ENCODE measurements at regions of chr16 and their contacts with region 1.

Region 1: DNA sequence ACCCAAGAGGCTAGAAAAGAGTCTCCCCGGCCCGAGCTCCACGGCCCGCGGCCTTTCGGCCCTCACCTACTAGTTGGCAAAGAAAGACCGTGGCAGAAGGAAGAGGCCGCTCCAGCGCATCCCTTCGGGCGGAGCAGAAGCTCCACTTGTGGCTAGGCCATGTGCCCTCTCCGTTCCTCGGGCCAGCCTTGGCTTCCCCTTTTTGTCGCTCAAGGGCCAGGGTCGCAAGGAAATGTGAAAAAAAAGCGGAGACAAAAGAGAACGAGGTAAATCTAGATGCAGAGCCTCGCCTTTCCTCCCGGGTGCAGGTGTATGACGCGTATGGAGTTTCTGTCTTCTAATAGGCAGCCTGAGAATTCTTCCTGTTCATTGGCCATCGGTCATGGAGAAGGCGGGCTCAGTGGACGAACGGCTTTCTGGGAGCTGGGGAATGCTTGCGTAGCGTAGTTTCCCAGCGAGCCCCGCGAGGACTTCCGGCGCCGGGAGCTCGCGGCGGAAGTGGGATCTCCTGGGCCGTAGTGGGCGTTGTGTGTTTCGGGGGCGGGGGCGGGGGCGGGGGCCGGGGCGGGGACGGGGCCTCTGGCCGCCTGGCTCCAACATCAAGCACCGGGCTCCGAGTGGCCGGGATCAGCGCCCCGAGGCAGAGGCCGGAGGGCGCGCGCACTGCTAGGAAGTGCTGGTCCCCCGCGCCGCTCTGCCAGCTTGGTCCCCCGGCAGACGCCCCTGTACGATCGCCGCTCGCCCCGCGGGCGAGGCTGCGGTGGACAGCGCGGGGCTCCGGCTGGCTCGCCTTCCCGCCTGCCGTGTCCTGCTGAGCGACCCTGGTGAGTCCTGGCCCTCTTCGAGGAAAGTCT is at the start of gene ZNF213:
- DNase-seq: peak; percentile 96
- H3K4me3 Mint-ChIP-seq: peak within 1 kb of the TSS; percentile 97
- H3K27ac Mint-ChIP-seq: peak within 1 kb of the TSS; percentile 88
- H3K4me1 Mint-ChIP-seq: peaks cover 38% of the 10 kb centered on the region
- H3K27me3 Mint-ChIP-seq: no peaks in the 10 kb centered on the region
- total RNA-seq, gene ZNF213: 10.5 to 11.6 TPM

Region 2: GRCh38 chr16:2656985-2657384 is 477.8 kb before region 1 on chr16:
- CTCF ChIA-PET with region 1: no interaction called
- POLR2A ChIA-PET with region 1: no interaction called
- DNase-seq: no peak
- H3K4me3 Mint-ChIP-seq: no peak overlapping the region
- H3K27ac Mint-ChIP-seq: no peak overlapping the region
- H3K4me1 Mint-ChIP-seq: peaks cover 18% of the 10 kb centered on the region
- H3K27me3 Mint-ChIP-seq: peaks cover 6% of the 10 kb centered on the region

Region 3: GRCh38 chr16:3045357-3045728 is 89.4 kb before region 1 on chr16:
- CTCF ChIA-PET with region 1: interaction called, 12 read pairs
- POLR2A ChIA-PET with region 1: interaction called, 15 read pairs
- DNase-seq: peak; percentile 61
- H3K4me3 Mint-ChIP-seq: peak overlapping the region; percentile 85
- H3K27ac Mint-ChIP-seq: peak overlapping the region; percentile 78
- H3K4me1 Mint-ChIP-seq: peaks cover 51% of the 10 kb centered on the region
- H3K27me3 Mint-ChIP-seq: peaks cover 24% of the 10 kb centered on the region

Region 4: DNA sequence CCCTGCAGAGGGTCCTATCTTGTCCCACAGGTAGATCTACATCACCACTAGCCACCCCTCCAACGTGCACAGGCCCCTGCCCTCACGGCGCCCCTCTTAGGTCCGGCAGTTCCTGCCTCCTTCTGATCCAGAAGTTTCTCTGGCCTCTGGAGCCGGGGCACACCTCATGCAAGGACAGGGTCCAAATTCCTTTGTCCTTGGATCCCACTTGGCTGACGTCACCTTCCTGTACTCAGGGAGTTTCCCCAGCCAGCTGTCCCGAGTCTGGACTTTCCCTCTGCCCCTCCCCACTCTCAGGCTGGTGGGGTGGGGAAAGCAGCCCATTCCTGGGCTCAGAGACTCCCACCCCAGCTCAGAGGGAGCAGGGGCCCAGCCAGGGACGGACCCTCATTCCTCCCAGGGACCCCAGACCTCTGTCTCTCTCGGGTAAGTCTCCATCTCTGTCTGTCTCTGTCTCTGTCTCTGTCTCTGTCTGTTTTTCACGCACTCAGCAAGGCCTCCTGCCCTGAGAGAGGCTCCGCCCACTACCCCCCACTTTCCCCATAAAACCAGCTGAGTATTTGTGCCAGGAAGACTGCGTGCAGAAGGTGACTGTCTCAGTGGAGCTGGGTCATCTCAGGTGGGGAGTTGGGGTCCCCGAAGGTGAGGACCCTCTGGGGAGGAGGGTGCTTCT is 69.6 kb before region 1 on chr16 and contains the start of gene IL32:
- CTCF ChIA-PET with region 1: interaction called, 177 read pairs
- POLR2A ChIA-PET with region 1: interaction called, 100 read pairs
- DNase-seq: peak; percentile 80
- H3K4me3 Mint-ChIP-seq: peak within 1 kb of the TSS; percentile 100
- H3K27ac Mint-ChIP-seq: peak within 1 kb of the TSS; percentile 99
- H3K4me1 Mint-ChIP-seq: peaks cover 68% of the 10 kb centered on the region
- H3K27me3 Mint-ChIP-seq: no peaks in the 10 kb centered on the region
- total RNA-seq, gene IL32: 4,131 to 4,213 TPM

Region 5: GRCh38 chr16:3099732-3100499 is 34.9 kb before region 1 on chr16:
- CTCF ChIA-PET with region 1: interaction called, 254 read pairs
- POLR2A ChIA-PET with region 1: interaction called, 14 read pairs
- DNase-seq: peak; percentile 96
- H3K4me3 Mint-ChIP-seq: peak overlapping the region; percentile 75
- H3K27ac Mint-ChIP-seq: peak overlapping the region; percentile 80
- H3K4me1 Mint-ChIP-seq: peaks cover 66% of the 10 kb centered on the region
- H3K27me3 Mint-ChIP-seq: no peaks in the 10 kb centered on the region

Region 6: DNA sequence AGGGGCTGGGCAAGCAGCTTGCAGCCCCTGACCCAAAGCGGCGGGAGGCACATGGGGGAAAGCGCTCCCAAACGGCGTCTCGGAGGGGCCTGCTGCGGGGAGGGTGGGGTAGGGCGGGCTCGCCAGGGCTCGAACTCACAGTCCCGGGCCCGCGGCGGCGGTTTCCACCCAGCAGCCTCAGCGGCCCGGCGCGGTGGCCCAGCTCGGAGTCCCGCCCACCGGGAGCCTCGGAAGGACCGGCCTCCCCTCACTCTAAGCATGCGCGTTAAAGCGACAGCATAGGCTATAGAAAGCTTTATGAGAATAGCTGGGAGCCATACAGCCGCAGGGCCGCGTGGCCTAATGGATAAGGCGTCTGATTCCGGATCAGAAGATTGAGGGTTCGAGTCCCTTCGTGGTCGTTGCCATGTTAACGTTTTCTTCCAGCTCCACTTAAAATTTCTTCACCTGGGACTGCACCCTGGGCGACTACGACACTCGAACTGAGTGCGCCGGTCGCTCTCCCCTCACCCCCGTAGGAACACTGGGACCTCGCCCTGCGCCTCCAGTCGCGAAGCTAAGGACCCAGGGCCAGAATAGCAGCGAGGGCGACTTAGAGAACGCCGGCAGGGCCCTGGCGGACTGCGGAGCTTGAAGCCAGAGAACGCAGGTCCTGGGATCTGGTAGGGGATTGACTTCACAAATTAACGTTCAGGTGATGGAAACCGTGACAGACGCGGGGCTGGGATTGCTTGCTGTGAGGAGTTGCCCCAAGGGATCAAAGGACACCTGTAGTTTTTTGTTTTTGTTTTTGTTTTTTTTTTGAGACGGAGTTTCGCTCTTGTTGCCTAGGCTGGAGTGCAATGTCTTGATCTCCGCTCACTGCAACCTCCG is 15.8 kb after region 1 on chr16:
- CTCF ChIA-PET with region 1: interaction called, 56 read pairs
- POLR2A ChIA-PET with region 1: interaction called, 51 read pairs
- DNase-seq: peak; percentile 99
- H3K4me3 Mint-ChIP-seq: peak overlapping the region; percentile 81
- H3K27ac Mint-ChIP-seq: peak overlapping the region; percentile 82
- H3K4me1 Mint-ChIP-seq: peaks cover 37% of the 10 kb centered on the region
- H3K27me3 Mint-ChIP-seq: peaks cover 22% of the 10 kb centered on the region

Region 7: DNA sequence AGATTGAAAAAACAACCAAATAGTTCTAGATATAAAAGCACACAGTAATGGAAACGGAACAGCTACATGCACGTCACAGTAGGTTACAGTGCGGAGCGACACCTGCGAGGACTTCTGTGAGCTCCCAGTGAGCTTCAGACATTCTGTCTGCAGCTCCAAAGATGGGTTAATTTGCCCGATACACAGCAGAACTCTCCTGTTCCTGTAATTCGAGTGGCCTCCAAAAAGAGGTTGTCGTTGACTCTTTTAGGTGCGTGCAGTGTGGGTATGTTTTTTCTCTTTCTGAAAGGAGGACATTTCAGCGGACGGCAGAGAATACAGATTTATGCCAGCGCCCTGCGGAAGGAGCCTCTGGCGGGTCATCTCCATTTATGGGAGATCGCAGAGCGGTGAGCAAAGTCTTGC is 56.2 kb after region 1 on chr16:
- CTCF ChIA-PET with region 1: no interaction called
- POLR2A ChIA-PET with region 1: no interaction called
- DNase-seq: peak; percentile 37
- H3K4me3 Mint-ChIP-seq: peak overlapping the region; percentile 71
- H3K27ac Mint-ChIP-seq: peak overlapping the region; percentile 63
- H3K4me1 Mint-ChIP-seq: peaks cover 46% of the 10 kb centered on the region
- H3K27me3 Mint-ChIP-seq: peaks cover 63% of the 10 kb centered on the region

Measured in activated CD4-positive, alpha-beta memory T cell treated with anti-CD3 and anti-CD28 coated beads, Interleukin-2, amount 10 ng/mL, durations not matched to agents 7 days and 5 days (primary cell).